Testis (tissue), 5 donors: ENCODE measurements at regions of chr18 and their contacts with region 1.

Region 1: DNA sequence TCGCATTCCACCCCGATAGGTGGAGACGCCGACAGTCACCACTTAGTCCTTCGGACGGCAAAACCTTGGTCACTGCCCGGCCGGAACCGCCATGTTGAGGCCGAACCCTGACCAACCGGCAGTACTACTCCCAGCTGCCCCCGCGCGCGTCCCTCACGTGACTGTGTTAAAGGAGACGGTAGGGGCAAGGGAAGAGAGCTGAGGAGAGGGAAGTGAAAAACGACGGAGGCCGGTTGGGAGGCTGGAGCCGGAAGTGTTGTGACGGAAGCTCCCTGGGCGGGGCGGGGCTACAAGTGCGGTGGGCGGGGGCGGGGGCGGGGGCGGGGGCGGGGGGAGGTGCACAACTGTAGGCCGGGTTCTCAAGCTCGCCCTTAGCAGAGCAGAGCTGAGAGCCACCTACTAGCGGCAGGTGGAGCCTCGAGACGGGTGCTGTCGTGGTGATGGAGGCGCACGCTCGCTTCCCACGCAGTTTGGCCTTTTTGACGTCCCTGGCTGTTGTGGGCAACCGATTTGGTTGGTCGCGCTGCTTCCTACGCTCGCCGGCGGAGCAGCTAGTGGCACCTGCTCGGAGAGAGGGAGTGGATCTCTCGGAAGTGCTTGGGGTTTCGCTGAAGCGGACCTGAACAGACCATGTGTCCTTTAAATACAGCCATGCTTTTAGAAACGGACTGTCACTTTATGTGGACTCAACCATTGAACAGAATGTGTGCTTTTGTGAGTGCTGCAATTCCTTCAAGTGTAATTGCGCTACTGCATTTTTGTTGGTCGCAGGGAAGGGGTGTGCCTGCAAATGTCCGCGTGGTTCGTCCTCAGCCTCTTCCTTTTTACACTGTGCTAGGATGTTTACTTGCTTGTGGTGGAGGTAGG is at the start of gene TRAPPC8:
- DNase-seq: peak; percentile 100
- H3K4me3 ChIP-seq: peak within 1 kb of the TSS; percentile 94 to 98
- H3K27ac ChIP-seq: peak within 1 kb of the TSS; percentile 93
- H3K4me1 ChIP-seq: peaks cover 15% of the 10 kb centered on the region
- H3K27me3 ChIP-seq: no peaks in the 10 kb centered on the region
- CTCF ChIP-seq: no peak
- POLR2A ChIP-seq: no peak
- total RNA-seq, gene TRAPPC8: 59.0 to 85.0 TPM

Region 2: GRCh38 chr18:31667185-31667584 is 276.0 kb before region 1 on chr18:
- intact Hi-C with region 1: no loop called
- DNase-seq: no peak
- H3K4me3 ChIP-seq: no peak overlapping the region
- H3K27ac ChIP-seq: no peak overlapping the region
- H3K4me1 ChIP-seq: no peaks in the 10 kb centered on the region
- H3K27me3 ChIP-seq: no peaks in the 10 kb centered on the region
- CTCF ChIP-seq: no peak
- POLR2A ChIP-seq: no peak

Region 3: DNA sequence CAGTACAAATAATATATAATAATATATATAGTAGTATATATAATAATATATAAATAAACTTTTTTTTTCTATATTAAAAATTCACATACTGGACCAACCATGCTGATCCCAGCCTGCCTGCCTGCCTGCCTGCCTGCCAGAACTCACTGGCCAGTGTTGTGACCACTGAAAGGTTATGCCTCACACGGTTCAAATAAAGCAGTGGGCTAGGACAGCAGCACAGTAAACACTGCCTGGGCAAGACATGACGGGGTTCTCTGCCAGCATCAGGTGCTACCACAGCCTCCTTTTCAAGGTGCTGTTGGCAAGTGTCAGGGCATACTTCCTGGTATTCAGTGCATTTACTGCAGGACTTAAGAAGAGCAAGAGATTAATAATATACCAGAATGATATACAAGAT is 67.9 kb before region 1 on chr18:
- intact Hi-C with region 1: no loop called
- DNase-seq: no peak
- H3K4me3 ChIP-seq: no peak overlapping the region
- H3K27ac ChIP-seq: no peak overlapping the region
- H3K4me1 ChIP-seq: no peaks in the 10 kb centered on the region
- H3K27me3 ChIP-seq: no peaks in the 10 kb centered on the region
- CTCF ChIP-seq: no peak
- POLR2A ChIP-seq: no peak

Region 4: DNA sequence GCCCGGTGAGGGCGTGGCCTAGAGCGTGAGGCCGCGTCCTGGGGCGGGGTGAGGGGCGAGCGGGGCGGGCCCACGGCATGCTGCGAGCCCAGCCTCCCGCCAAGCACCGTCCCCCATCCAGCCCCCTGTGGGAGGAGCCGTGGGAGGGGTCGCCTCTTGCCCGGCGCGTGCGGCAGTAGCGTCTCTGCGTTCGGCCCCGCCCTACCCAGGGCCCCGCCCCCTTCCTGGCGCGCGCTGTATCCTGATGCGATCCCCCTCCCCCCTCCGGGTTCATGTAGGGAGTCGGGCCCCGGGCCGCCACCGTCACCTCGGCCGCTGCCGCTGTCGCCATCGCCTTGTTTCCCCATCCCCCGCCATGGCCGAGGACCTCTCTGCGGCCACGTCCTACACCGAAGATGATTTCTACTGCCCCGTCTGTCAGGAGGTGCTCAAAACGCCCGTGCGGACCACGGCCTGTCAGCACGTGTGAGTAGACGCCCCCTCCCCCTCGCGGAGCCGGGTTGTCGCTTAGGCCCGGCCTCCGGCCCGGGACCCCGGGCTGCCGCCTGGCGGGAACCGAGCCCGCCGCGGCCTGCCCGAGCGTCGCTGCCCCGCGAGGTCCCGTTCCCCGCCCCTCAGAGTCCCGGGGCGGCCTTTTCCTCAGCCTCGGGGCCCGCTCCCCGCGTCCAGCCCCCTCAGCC is 149.3 kb after region 1 on chr18:
- intact Hi-C with region 1: loop called (anchors 5 kb)
- DNase-seq: peak; percentile 99
- H3K4me3 ChIP-seq: peak overlapping the region; percentile 93 to 96
- H3K27ac ChIP-seq: peak overlapping the region; percentile 99 to 100
- H3K4me1 ChIP-seq: peaks cover 10% of the 10 kb centered on the region
- H3K27me3 ChIP-seq: no peaks in the 10 kb centered on the region
- CTCF ChIP-seq: no peak
- POLR2A ChIP-seq: no peak